Ovary (tissue), 10 donors: ENCODE measurements at regions of chr21 and their contacts with region 1.

Region 1: GRCh38 chr21:43644609-43645008 is 14.7 kb downstream of the HSF2BP start:
- DNase-seq: no peak
- H3K4me3 ChIP-seq: no peak overlapping the region
- H3K27ac ChIP-seq: no peak overlapping the region
- H3K4me1 ChIP-seq: no peaks in the 10 kb centered on the region
- H3K27me3 ChIP-seq: no peaks in the 10 kb centered on the region
- CTCF ChIP-seq: no peak
- EP300 ChIP-seq: no peak
- POLR2A ChIP-seq: no peak

Region 2: GRCh38 chr21:43352568-43353281 is 291.9 kb before region 1 on chr21:
- intact Hi-C with region 1: loop called in 1 of 4 experiments (anchors 5 kb)
- DNase-seq: no peak
- H3K4me3 ChIP-seq: no peak overlapping the region
- H3K27ac ChIP-seq: no peak overlapping the region
- H3K4me1 ChIP-seq: no peaks in the 10 kb centered on the region
- H3K27me3 ChIP-seq: no peaks in the 10 kb centered on the region
- CTCF ChIP-seq: no peak
- EP300 ChIP-seq: no peak
- POLR2A ChIP-seq: no peak